Common myeloid progenitor, CD34-positive (primary cell): ENCODE measurements at regions of chr1 and their contacts with region 1.

Region 1: GRCh38 chr1:119008483-119009311 is 20.6 kb upstream of the TBX15 start:
- DNase-seq: peak; percentile 68 to 85 (median 78)
- H3K4me3 ChIP-seq: peak overlapping the region in 4 of 7 experiments; percentile 8 to 56 (median 44)
- H3K27ac ChIP-seq: no peak overlapping the region
- H3K4me1 ChIP-seq: peaks cover 2 to 21% (median 12%) of the 10 kb centered on the region in 4 experiments
- H3K27me3 ChIP-seq: peaks cover 22 to 81% (median 47%) of the 10 kb centered on the region in 5 experiments

Region 2: GRCh38 chr1:118979754-118980575 is 28.7 kb before region 1 on chr1:
- CTCF ChIA-PET with region 1: interaction called, 13 read pairs
- POLR2A ChIA-PET with region 1: no interaction called
- DNase-seq: no peak
- H3K4me3 ChIP-seq: no peak overlapping the region
- H3K27ac ChIP-seq: no peak overlapping the region
- H3K4me1 ChIP-seq: peaks cover 0 to 18% (median 12%) of the 10 kb centered on the region in 4 experiments
- H3K27me3 ChIP-seq: peaks cover 30 to 99% (median 64%) of the 10 kb centered on the region in 5 experiments

Region 3: DNA sequence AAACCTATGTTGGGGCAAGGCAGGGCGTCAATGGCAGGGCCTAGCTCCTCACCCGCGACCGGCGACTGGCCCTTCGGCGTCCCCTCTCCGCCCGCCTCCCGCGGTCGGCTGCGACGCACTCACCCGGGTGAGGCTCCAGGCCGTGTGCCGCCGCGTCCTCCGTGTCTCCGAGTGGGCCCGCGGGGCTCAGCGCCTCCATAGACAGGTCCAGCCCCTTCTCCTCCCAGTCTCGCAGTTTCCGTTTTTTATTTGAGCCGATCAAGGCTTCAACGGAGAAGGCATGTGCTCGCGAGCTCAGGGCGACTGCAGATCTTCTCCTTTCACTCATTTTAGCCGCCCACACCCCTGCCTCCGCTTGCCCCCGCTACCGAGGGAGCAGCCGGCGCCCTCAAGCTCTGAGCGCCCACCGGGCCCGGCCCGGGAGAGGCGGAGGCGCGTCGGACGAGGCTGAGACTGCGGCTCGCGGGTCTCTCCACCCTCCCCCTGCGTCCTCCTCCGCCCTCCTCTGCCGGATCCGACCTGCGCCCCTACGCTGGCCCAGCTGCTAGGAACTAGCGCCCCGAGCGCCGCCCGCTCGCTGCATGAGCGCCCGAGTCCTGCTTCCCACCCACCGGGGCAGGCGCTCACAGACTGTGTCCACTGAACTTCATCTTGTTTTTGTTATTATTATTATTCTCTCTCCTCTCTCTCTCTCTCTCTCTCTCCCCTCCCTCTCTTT is 21.1 kb before region 1 on chr1:
- CTCF ChIA-PET with region 1: interaction called, 29 read pairs
- POLR2A ChIA-PET with region 1: no interaction called
- DNase-seq: peak in 2 of 3 donors; percentile 56 to 67
- H3K4me3 ChIP-seq: peak overlapping the region in 6 of 7 experiments; percentile 9 to 67 (median 24)
- H3K27ac ChIP-seq: no peak overlapping the region
- H3K4me1 ChIP-seq: peaks cover 0 to 42% (median 35%) of the 10 kb centered on the region in 4 experiments
- H3K27me3 ChIP-seq: peaks cover 12 to 100% (median 71%) of the 10 kb centered on the region in 5 experiments

Region 4: DNA sequence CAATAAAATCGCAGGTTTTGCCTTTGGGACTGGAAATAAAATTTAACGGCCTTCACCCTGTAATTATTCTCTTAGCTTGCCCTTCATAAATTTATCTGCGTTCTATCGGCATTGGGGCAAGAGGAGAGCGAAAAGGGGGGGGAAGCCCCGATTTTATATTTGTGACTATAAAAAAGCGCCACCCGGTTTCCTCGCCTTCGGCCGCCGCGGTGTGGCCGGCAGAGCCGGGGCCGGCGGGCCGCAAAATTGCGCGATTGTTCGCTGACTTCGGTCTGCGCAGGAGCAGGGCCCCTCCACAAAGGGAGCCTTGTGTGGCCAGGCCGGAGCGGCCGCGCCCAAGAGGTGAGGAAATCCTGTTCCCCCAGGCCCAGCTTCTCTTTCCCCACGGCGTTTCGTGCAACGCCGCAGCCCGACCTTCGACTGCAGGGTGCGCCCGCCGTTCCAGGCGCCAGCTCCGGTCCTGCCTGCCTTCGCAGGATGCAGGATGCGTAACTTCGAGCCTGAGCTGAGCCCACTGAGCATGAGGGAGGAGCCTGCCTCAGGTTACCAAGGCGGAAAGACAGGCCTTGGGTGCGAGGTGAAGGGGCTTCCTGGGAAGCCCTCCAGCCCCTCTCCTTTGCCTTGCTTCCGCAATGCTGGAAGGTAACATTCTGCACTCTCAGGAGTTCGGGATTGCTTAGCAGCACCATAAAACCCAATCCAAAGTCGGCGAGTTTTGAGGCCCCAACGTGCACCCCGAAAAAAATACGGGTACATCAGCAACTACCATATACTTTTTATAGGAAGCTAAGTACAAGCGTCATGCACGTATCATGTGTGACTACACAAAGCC is 15.6 kb before region 1 on chr1:
- CTCF ChIA-PET with region 1: interaction called, 29 read pairs
- POLR2A ChIA-PET with region 1: no interaction called
- DNase-seq: no peak
- H3K4me3 ChIP-seq: no peak overlapping the region
- H3K27ac ChIP-seq: no peak overlapping the region
- H3K4me1 ChIP-seq: peaks cover 0 to 20% (median 16%) of the 10 kb centered on the region in 4 experiments
- H3K27me3 ChIP-seq: peaks cover 28 to 100% (median 77%) of the 10 kb centered on the region in 5 experiments

Region 5: GRCh38 chr1:119027759-119028158 is 19.1 kb after region 1 on chr1:
- CTCF ChIA-PET with region 1: no interaction called
- POLR2A ChIA-PET with region 1: no interaction called
- DNase-seq: no peak
- H3K4me3 ChIP-seq: no peak overlapping the region
- H3K27ac ChIP-seq: no peak overlapping the region
- H3K4me1 ChIP-seq: no peaks in the 10 kb centered on the region
- H3K27me3 ChIP-seq: no peaks in the 10 kb centered on the region

Region 6: GRCh38 chr1:119052267-119052666 is 43.6 kb after region 1 on chr1:
- CTCF ChIA-PET with region 1: no interaction called
- POLR2A ChIA-PET with region 1: no interaction called
- DNase-seq: no peak
- H3K4me3 ChIP-seq: no peak overlapping the region
- H3K27ac ChIP-seq: no peak overlapping the region
- H3K4me1 ChIP-seq: no peaks in the 10 kb centered on the region
- H3K27me3 ChIP-seq: no peaks in the 10 kb centered on the region